ENCODE measurements at regions of chr12 and their contacts with region 1.

Region 1: GRCh38 chr12:123580772-123581171 is 3.6 kb upstream of the TMED2 start:
- DNase-seq: no peak
- ATAC-seq: no peak
- H3K4me3 Mint-ChIP-seq: no peak overlapping the region
- H3K27ac Mint-ChIP-seq: no peak overlapping the region
- H3K4me1 Mint-ChIP-seq: peaks cover 26% of the 10 kb centered on the region
- H3K27me3 Mint-ChIP-seq: no peaks in the 10 kb centered on the region
- CTCF ChIP-seq: no peak

Region 2: DNA sequence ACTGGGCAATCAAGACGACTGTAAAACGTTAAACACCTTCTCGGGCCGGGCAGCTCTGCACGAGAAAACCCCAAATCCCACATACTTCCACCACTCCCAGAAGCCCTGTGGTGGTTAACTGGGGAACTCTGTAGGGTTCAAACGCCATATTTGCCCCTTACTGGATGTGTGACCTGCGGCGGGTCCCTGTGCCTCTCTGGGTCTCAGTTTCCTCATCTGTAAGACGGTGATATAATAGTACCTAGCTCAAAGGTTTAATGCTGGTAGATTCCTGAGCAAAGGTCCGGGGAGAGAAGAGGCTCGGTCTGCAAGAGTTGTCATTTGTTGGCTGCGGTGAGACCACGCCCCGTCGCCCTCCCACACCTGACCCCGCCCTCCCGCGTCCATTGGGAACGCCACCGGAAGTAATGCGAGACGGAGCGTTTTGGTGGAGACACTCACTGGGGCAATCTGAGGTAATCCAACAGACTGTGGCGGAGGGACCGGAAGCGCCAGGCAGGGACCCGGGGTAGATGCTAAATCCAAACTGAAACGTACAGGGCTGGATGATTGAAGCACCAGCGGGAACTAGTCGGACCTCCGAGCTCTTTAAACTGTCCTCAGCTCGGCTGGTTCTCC is 606.4 kb before region 1 on chr12:
- CTCF ChIA-PET with region 1: no interaction called
- POLR2A ChIA-PET with region 1: no interaction called
- intact Hi-C with region 1: loop called (anchors 1 kb)
- DNase-seq: peak; percentile 96
- ATAC-seq: peak; percentile 87
- H3K4me3 Mint-ChIP-seq: peak overlapping the region; percentile 98
- H3K27ac Mint-ChIP-seq: peak overlapping the region; percentile 99
- H3K4me1 Mint-ChIP-seq: peaks cover 28% of the 10 kb centered on the region
- H3K27me3 Mint-ChIP-seq: no peaks in the 10 kb centered on the region
- CTCF ChIP-seq: no peak

Region 3: DNA sequence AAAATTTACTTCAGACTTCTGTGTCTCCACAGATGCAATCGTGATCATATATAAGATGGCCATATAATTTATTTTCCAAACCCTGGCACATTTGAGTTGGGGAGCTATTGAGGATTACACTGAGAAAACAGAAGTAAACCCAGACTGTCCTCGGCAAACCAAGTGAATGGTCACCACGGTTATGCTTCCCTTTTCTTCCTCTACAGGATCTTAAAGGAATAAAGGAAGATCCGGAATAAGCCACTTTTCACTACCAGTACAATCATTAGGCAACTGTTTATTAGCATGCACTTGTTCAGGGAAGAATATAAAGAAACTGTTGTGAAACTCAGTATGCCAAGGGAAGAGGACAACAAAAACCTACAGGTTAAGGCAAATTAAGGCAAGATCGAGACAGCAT is 243.7 kb before region 1 on chr12:
- CTCF ChIA-PET with region 1: interaction called, 4 read pairs
- POLR2A ChIA-PET with region 1: no interaction called
- intact Hi-C with region 1: loop called (anchors 5 kb)
- DNase-seq: no peak
- ATAC-seq: no peak
- H3K4me3 Mint-ChIP-seq: no peak overlapping the region
- H3K27ac Mint-ChIP-seq: no peak overlapping the region
- H3K4me1 Mint-ChIP-seq: peaks cover 9% of the 10 kb centered on the region
- H3K27me3 Mint-ChIP-seq: no peaks in the 10 kb centered on the region
- CTCF ChIP-seq: no peak

Region 4: GRCh38 chr12:123436017-123436964 is 144.5 kb before region 1 on chr12 and contains the start of gene RILPL2:
- CTCF ChIA-PET with region 1: no interaction called
- POLR2A ChIA-PET with region 1: no interaction called
- intact Hi-C with region 1: loop called (anchors 5 kb)
- DNase-seq: peak; percentile 93
- ATAC-seq: peak; percentile 83
- H3K4me3 Mint-ChIP-seq: peak within 1 kb of the TSS; percentile 98
- H3K27ac Mint-ChIP-seq: peak within 1 kb of the TSS; percentile 97
- H3K4me1 Mint-ChIP-seq: peaks cover 52% of the 10 kb centered on the region
- H3K27me3 Mint-ChIP-seq: no peaks in the 10 kb centered on the region
- CTCF ChIP-seq: no peak
- total RNA-seq, gene RILPL2: 11.2 and 12.2 TPM in 2 replicates

Region 5: DNA sequence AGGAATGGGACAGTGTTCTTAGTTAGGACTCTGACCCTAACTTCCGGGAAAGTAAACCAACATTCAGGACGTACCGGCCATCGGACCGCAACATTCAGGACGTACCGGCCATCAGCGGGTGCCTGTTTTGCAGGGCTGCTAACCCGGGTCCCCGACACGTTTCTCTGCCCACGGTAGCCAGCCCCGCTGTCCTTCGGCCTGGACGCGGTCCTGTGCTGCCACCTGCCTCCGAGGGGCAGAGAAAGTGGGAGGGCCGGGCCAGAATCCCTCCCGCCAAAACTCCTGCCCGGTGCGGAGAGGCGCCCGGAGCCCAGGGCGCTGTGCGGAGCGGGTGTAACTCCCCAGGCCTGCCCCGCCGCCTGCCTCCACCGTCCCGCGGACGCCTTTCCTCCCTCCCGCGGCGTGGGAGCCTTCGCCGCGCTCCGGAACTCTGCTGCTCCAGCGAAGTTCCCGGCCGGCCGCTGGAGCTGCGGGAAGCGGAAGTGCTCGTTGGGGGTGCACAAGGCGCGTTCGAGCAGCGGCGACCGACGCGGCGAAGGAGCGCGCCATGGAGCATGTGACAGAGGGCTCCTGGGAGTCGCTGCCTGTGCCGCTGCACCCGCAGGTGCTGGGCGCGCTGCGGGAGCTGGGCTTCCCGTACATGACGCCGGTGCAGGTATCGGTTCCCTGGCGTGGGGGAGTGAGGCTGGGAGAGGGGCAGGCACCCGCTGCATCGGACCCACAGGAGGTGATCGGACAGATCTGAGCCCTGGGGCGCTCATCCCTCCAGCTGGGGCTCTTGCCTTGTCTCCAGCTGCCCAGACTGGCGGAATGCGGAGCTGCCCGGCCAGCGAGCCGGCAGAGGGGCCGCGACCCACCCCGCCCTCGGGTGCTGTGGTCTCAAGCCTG is 21.1 kb after region 1 on chr12 and contains the start of gene DDX55:
- CTCF ChIA-PET with region 1: interaction called, 5 read pairs
- POLR2A ChIA-PET with region 1: no interaction called
- intact Hi-C with region 1: loop called (anchors 1 kb)
- DNase-seq: peak; percentile 86
- ATAC-seq: peak; percentile 89
- H3K4me3 Mint-ChIP-seq: peak within 1 kb of the TSS; percentile 97
- H3K27ac Mint-ChIP-seq: peak within 1 kb of the TSS; percentile 92
- H3K4me1 Mint-ChIP-seq: peaks cover 24% of the 10 kb centered on the region
- H3K27me3 Mint-ChIP-seq: no peaks in the 10 kb centered on the region
- CTCF ChIP-seq: no peak
- total RNA-seq, gene DDX55: 28.8 and 35.0 TPM in 2 replicates

Measured in activated B cell treated with CpG ODN at 0.5 μM for 24 hours (primary cell).